ENCODE measurements at regions of chr10 and their contacts with region 1.

Region 1: DNA sequence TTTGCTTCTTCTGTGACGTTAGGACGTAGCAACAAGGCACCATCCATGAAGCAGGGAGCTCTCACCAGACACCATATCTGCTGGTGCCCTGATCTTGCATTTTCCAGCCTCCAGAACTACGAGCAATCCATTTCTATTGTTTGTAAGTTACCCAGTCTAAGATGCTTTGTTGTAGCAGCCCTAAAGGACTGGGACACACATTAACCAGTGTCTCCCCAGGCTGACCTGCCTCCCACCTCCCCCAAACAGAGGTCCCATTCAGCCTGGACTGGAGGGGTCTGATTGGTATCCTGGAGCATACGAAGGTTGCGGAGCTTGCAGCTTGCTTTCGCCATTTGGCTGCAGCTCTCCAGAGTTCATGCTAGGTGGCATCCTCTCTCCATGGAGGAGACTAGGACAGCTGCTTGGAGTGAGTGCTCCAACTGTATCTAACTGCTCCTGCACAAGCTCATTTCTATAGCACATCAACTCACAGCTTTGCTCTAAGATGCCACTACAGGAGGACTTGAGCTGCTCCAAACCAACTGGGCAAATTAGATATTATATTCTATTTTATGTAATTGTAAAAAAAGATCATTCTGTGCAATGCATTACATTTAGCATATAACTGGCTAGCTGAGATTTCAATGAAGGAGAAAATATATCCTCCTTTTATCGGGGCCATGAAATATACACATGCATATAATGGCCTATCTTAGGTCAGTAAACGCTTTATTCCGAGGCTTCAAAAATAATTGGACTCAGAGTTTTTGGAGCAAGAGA is 8.0 kb upstream of the GRK5 start:
- DNase-seq: peak in 1 of 2 donors; percentile 77
- H3K4me3 ChIP-seq: no peak overlapping the region
- H3K27ac ChIP-seq: no peak overlapping the region
- H3K4me1 ChIP-seq: peaks cover 0 to 4% of the 10 kb centered on the region in 2 donors
- H3K27me3 ChIP-seq: no peaks in the 10 kb centered on the region
- CTCF ChIP-seq: peak; percentile 69 to 89 (median 82)

Region 2: GRCh38 chr10:119149723-119150122 is 49.7 kb before region 1 on chr10:
- intact Hi-C with region 1: no loop called
- DNase-seq: no peak
- H3K4me3 ChIP-seq: no peak overlapping the region
- H3K27ac ChIP-seq: no peak overlapping the region
- H3K4me1 ChIP-seq: no peaks in the 10 kb centered on the region
- H3K27me3 ChIP-seq: no peaks in the 10 kb centered on the region
- CTCF ChIP-seq: no peak

Region 3: DNA sequence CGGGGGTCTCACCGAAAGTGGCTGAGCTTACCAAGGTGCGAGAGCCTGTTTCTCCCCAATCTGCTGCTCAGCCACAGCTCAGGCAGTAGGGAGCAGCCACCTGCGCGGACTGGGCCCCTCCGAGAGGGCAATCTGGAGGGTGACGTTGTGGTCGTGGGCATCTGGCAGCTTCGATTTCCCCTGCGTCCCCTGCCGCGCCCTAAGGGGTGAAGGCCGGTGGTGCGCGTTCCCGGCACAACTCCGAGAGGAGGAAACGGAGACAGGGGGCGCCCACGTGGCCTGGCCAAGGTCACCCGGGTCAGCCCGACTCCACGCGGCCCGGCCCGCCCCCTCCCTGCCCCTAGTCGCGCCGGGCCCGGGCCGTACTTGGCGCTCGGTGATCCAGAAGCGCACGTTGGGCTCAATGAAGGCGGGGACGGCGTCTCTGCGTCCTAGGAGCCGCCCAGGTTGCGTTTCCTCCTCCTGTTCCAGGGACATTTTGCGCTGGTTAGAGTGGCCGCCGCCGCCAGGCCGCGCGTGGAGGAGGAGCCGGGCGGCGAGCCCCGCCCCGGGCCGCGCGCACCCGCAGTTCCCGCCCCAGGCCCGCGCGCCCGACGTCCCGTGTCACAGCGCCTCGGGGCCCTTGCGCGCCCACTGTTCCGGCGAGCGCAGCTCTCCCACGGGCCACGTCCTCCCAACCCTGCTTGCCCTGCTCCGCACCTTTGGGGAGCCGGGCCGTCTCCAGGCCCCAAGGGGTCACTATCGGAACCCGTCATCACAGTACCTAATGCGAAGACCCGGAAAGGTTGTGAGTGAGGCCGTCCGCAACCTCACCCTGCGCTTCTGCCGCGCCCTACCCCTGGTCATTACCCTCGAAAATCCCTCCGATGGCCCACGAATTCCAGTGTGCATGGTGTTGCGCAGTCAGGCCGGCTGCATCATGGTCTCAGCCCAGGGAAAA is 34.0 kb before region 1 on chr10 and contains the start of gene SFXN4:
- intact Hi-C with region 1: no loop called
- DNase-seq: peak; percentile 14 to 88
- H3K4me3 ChIP-seq: peak within 1 kb of the TSS; percentile 72 to 89
- H3K27ac ChIP-seq: peak within 1 kb of the TSS; percentile 73 to 91
- H3K4me1 ChIP-seq: peaks cover 6% of the 10 kb centered on the region in 2 donors
- H3K27me3 ChIP-seq: no peaks in the 10 kb centered on the region
- CTCF ChIP-seq: no peak
- total RNA-seq, gene SFXN4: 13.7 TPM

Region 4: DNA sequence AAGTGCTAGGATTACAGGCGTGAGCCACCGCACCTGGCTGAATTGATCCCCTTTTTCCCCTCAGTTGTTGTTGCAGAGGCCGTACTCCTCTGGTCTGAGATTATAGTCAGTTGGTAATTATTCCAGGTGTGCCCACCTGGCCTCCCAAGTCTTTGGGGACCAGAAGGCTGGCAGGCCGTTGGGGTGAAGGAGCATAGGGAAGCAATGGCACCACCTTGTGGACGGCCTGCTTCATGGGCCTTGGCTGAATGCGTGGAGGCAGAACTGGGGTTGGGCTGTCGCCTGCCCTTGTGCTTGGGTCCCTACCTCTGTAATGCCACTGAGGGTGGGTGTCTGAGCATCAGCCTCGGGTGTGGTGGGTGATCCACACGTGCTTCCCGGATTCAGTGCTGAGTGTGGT is 217.4 kb after region 1 on chr10:
- intact Hi-C with region 1: loop called (anchors 1 kb)
- DNase-seq: peak in 1 of 2 donors; percentile 81
- H3K4me3 ChIP-seq: no peak overlapping the region
- H3K27ac ChIP-seq: no peak overlapping the region
- H3K4me1 ChIP-seq: peaks cover 9 to 20% of the 10 kb centered on the region in 2 donors
- H3K27me3 ChIP-seq: no peaks in the 10 kb centered on the region
- CTCF ChIP-seq: peak; percentile 60 to 71 (median 63)

Region 5: DNA sequence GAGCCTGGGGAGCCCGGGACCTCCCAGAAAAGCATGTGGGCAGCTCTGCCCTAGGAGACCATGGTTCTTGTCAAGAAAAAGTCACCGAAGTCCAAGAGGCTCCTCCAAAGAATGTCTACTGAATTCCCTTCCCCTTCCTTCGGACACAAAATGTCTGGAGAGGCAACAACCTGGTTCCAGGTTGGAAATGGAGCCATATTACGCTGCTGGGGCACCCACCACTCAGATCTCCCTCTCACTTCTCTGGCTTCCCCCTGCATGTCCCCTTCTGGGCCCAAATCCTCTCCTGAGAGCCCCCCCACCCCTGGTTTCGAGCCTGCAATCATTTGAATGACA is 290.5 kb after region 1 on chr10:
- intact Hi-C with region 1: loop called (anchors 1 kb)
- DNase-seq: no peak
- H3K4me3 ChIP-seq: peak overlapping the region; percentile 25 to 54
- H3K27ac ChIP-seq: no peak overlapping the region
- H3K4me1 ChIP-seq: peaks cover 4 to 5% of the 10 kb centered on the region in 2 donors
- H3K27me3 ChIP-seq: no peaks in the 10 kb centered on the region
- CTCF ChIP-seq: no peak

Region 6: DNA sequence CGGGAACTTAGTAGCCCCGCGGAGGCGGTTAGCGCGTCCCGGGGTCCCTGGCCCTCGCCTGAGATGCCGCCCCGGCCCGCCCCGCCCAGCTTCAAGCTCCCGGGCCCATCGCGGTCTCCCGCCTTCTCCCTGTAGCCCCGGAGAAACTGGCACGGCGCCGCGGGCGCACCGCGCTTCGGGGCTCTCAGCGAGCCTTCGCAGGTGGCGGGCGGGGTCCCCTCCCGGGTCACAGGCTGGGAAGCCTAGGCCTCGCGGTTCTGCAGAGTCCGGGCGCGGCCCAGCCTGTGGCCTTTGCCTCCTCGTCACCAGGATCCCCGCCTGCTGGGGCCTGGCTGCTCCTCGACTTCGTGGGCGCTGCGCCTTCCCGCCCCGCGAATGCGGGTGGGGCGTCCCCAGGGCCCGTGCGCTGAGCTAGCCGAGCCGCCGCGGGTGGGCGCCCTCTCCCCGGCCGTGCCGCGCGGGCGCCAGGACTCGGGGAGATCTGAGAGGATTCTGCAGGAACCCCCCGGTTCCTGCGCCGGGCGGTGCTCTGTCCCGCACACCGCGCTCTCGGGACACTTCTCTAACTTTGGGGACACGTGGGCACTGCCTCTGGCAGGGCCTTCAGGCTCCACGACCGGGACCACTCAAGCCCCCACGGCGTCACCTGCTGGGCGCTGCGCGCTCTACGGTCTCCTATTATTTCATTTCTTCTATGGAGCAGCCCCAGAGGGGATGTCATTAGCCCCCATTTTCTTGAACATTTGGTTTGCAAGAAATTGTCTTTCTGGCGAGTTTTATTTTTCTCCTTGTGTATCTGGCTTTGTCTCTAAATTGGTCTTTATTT is 343.8 kb after region 1 on chr10:
- intact Hi-C with region 1: loop called (anchors 2 kb)
- DNase-seq: peak in 1 of 2 donors; percentile 71
- H3K4me3 ChIP-seq: peak overlapping the region; percentile 85 to 89
- H3K27ac ChIP-seq: peak overlapping the region; percentile 58 to 79
- H3K4me1 ChIP-seq: peaks cover 0 to 10% of the 10 kb centered on the region in 2 donors
- H3K27me3 ChIP-seq: no peaks in the 10 kb centered on the region
- CTCF ChIP-seq: peak in 2 of 3 experiments; percentile 40 to 66